ENCODE measurements at regions of chr16 and their contacts with region 1.

Region 1: DNA sequence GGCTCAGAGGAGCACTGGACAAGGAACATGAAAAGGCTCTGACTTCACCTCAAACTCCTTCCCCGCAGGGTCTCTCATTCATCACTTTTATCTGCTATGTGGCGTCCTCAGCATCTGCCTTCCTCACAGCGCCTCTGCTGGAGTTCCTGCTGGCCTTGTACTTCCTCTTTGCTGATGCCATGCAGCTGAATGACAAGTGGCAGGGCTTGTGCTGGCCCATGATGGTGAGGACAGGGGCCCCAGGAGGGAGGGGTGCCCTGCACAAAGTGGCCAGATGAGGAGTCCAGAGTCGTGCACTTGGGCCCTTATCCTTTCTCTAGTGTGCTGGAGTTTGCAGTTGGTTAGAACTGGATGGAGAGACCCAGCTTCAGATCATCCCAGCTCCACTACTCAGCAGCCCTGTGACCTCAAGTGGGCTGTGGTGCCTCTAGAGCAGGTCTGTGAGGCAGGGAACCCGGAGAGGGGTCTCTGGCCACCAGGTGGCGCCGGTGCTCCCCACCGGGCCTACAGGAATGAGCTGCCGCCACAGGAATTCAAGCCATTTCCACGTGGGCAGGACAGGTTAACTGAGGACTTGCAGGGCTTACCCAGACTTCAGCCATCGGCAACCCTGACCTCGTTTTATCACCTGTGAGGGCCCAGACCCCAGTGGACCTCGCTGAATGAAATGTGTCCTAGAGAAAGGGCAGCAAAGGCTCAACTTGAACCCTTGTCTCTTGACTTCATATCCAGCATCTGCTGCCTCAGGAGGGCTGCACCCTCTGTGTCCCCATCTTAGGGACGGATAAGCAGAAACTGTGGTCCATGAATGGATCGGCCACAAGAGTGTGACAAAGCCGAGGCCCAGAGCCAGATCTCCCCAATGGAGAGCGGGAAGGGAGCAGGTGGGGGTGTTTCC is 4.0 kb downstream of the CMTM3 start:
- DNase-seq: peak; percentile 76 to 80 (median 76)
- H3K4me3 ChIP-seq: no peak overlapping the region
- H3K4me3 Mint-ChIP-seq: peak overlapping the region in 5 of 8 donors; percentile 36 to 77 (median 36)
- H3K27ac ChIP-seq: peak overlapping the region; percentile 48
- H3K27ac Mint-ChIP-seq: peak overlapping the region; percentile 10 to 83 (median 61)
- H3K4me1 ChIP-seq: peaks cover 42% of the 10 kb centered on the region
- H3K4me1 Mint-ChIP-seq: peaks cover 14 to 41% (median 29%) of the 10 kb centered on the region in 4 donors
- H3K27me3 ChIP-seq: no peaks in the 10 kb centered on the region
- H3K27me3 Mint-ChIP-seq: peaks cover 0 to 4% of the 10 kb centered on the region in 2 donors

Region 2: GRCh38 chr16:66406534-66407221 is 201.8 kb before region 1 on chr16:
- CTCF ChIA-PET with region 1: interaction called, 14 read pairs
- POLR2A ChIA-PET with region 1: interaction called, 40 read pairs
- intact Hi-C with region 1: loop called (anchors 1 kb)
- DNase-seq: peak; percentile 76 to 85 (median 81)
- H3K4me3 ChIP-seq: peak overlapping the region; percentile 57 to 62
- H3K4me3 Mint-ChIP-seq: peak overlapping the region; percentile 86 to 94 (median 89)
- H3K27ac ChIP-seq: no peak overlapping the region
- H3K27ac Mint-ChIP-seq: peak overlapping the region in 6 of 7 donors; percentile 64 to 76 (median 68)
- H3K4me1 ChIP-seq: peaks cover 32% of the 10 kb centered on the region
- H3K4me1 Mint-ChIP-seq: peaks cover 17 to 37% (median 28%) of the 10 kb centered on the region in 4 donors
- H3K27me3 ChIP-seq: no peaks in the 10 kb centered on the region
- H3K27me3 Mint-ChIP-seq: peaks cover 6% of the 10 kb centered on the region in 2 donors

Region 3: GRCh38 chr16:66521951-66522771 is 86.3 kb before region 1 on chr16:
- CTCF ChIA-PET with region 1: interaction called, 6 read pairs
- POLR2A ChIA-PET with region 1: interaction called, 49 read pairs
- intact Hi-C with region 1: loop called (anchors 2 kb)
- DNase-seq: peak; percentile 71 to 96 (median 77)
- H3K4me3 ChIP-seq: peak overlapping the region; percentile 32 to 57
- H3K4me3 Mint-ChIP-seq: peak overlapping the region; percentile 73 to 86 (median 79)
- H3K27ac ChIP-seq: peak overlapping the region; percentile 51
- H3K27ac Mint-ChIP-seq: peak overlapping the region; percentile 89 to 98 (median 95)
- H3K4me1 ChIP-seq: peaks cover 82% of the 10 kb centered on the region
- H3K4me1 Mint-ChIP-seq: peaks cover 64 to 100% (median 82%) of the 10 kb centered on the region in 4 donors
- H3K27me3 ChIP-seq: no peaks in the 10 kb centered on the region
- H3K27me3 Mint-ChIP-seq: no peaks in the 10 kb centered on the region

Region 4: DNA sequence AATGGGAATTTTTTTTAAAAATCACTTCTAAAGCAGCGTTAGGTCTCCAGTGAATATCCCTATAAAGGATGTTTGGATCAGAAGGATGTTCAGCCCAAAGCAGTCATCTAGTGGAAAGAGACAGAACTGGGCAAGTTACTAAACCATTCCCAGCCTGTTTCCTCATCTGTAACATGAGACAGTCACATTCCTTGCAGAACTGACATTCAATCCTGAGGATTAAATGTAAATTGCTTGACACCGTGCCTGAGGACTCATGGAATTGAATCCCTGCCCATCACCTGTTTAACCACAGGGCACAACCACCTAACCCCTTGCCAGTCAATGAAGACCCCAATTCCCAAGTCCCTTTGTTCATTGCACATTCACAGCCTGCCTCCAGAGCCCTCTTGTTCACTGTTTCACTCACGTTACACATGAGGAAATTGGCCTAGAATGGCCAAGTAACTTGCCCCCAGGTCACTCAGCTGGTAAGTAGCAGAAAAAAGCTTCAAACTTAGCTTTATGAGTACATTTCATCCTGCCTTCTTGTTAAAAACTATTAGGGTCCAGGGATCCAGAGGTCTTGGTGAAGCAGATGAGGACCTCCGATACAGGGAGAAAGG is 27.8 kb before region 1 on chr16:
- CTCF ChIA-PET with region 1: interaction called, 7 read pairs
- POLR2A ChIA-PET with region 1: interaction called, 11 read pairs
- intact Hi-C with region 1: no loop called
- DNase-seq: no peak
- H3K4me3 ChIP-seq: no peak overlapping the region
- H3K4me3 Mint-ChIP-seq: peak overlapping the region in 2 of 8 donors; percentile 1 to 4
- H3K27ac ChIP-seq: no peak overlapping the region
- H3K27ac Mint-ChIP-seq: no peak overlapping the region
- H3K4me1 ChIP-seq: peaks cover 5% of the 10 kb centered on the region
- H3K4me1 Mint-ChIP-seq: peaks cover 4 to 17% (median 9%) of the 10 kb centered on the region in 4 donors
- H3K27me3 ChIP-seq: peaks cover 3% of the 10 kb centered on the region
- H3K27me3 Mint-ChIP-seq: peaks cover 2 to 6% of the 10 kb centered on the region in 2 donors

Region 5: GRCh38 chr16:66618588-66619375 is 10.3 kb after region 1 on chr16:
- CTCF ChIA-PET with region 1: interaction called, 16 read pairs
- POLR2A ChIA-PET with region 1: interaction called, 4 read pairs
- intact Hi-C with region 1: no loop called
- DNase-seq: no peak
- H3K4me3 ChIP-seq: no peak overlapping the region
- H3K4me3 Mint-ChIP-seq: no peak overlapping the region
- H3K27ac ChIP-seq: no peak overlapping the region
- H3K27ac Mint-ChIP-seq: no peak overlapping the region
- H3K4me1 ChIP-seq: no peaks in the 10 kb centered on the region
- H3K4me1 Mint-ChIP-seq: no peaks in the 10 kb centered on the region
- H3K27me3 ChIP-seq: no peaks in the 10 kb centered on the region
- H3K27me3 Mint-ChIP-seq: no peaks in the 10 kb centered on the region

Region 6: DNA sequence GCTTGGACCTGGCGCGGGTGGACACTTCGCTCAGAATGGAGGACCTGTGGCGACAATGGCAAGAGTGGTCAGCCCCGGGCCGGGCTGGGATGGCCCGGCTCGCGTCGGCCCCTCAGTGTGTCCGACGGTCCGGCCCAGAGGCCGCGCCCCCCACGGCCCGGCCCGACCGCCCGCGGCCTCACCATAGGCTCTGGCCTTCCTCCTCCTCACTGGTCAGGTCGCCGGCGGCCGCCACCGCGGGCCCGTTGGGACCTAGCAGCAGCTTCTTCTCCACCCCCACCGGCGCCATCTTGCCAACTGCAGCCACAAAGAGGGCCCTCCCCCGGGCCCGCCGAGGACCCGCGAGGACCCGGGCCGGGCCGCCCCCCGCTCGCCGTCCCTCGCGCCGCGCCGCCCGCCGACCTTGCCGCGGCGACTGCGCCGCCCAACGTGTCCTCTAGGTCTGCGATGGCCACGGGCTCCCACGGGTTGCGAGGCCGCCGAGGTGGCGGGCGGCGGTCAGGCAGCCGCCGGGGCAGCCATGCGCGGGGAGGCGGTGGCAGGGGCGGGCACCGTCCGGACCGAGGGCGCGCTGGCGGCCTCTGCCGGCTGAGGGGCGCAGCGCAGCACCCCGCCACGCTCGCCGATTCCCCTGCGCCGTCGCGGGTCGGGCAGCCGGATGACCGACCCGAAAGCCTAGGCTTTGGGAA is 143.0 kb after region 1 on chr16 and contains the start of gene DYNC1LI2:
- CTCF ChIA-PET with region 1: interaction called, 7 read pairs
- POLR2A ChIA-PET with region 1: interaction called, 6 read pairs
- intact Hi-C with region 1: loop called (anchors 2 kb)
- DNase-seq: peak; percentile 82 to 91 (median 87)
- H3K4me3 ChIP-seq: peak within 1 kb of the TSS; percentile 64 to 73
- H3K4me3 Mint-ChIP-seq: peak within 1 kb of the TSS; percentile 91 to 95 (median 93)
- H3K27ac ChIP-seq: peak within 1 kb of the TSS; percentile 85
- H3K27ac Mint-ChIP-seq: peak within 1 kb of the TSS; percentile 85 to 95 (median 94)
- H3K4me1 ChIP-seq: peaks cover 34% of the 10 kb centered on the region
- H3K4me1 Mint-ChIP-seq: peaks cover 31 to 46% (median 37%) of the 10 kb centered on the region in 4 donors
- H3K27me3 ChIP-seq: no peaks in the 10 kb centered on the region
- H3K27me3 Mint-ChIP-seq: peaks cover 0 to 4% of the 10 kb centered on the region in 2 donors
- total RNA-seq, gene DYNC1LI2: 73.2 to 78.1 TPM